ENCODE measurements at regions of chr16 and their contacts with region 1.

Region 1: GRCh38 chr16:26524281-26524680 is 542.4 kb upstream of the C16orf82 start:
- DNase-seq: no peak
- ATAC-seq: no peak
- H3K4me3 ChIP-seq: no peak overlapping the region
- H3K27ac ChIP-seq: no peak overlapping the region
- H3K4me1 ChIP-seq: no peaks in the 10 kb centered on the region
- H3K27me3 ChIP-seq: no peaks in the 10 kb centered on the region
- CTCF ChIP-seq: no peak

Region 2: GRCh38 chr16:26464576-26465266 is 59.6 kb before region 1 on chr16:
- intact Hi-C with region 1: loop called in 1 of 10 experiments (anchors 10 kb)
- DNase-seq: no peak
- ATAC-seq: no peak
- H3K4me3 ChIP-seq: no peak overlapping the region
- H3K27ac ChIP-seq: no peak overlapping the region
- H3K4me1 ChIP-seq: no peaks in the 10 kb centered on the region
- H3K27me3 ChIP-seq: peaks cover 0 to 4% (median 0%) of the 10 kb centered on the region in 7 donors
- CTCF ChIP-seq: no peak

Region 3: GRCh38 chr16:26643519-26643918 is 119.2 kb after region 1 on chr16:
- intact Hi-C with region 1: loop called in 1 of 10 experiments (anchors 10 kb)
- DNase-seq: no peak
- ATAC-seq: no peak
- H3K4me3 ChIP-seq: no peak overlapping the region
- H3K27ac ChIP-seq: no peak overlapping the region
- H3K4me1 ChIP-seq: no peaks in the 10 kb centered on the region
- H3K27me3 ChIP-seq: peaks cover 0 to 9% (median 0%) of the 10 kb centered on the region in 7 donors
- CTCF ChIP-seq: no peak